AG04450 (cell line): ENCODE measurements at regions of chr4 and their contacts with region 1.

Region 1: DNA sequence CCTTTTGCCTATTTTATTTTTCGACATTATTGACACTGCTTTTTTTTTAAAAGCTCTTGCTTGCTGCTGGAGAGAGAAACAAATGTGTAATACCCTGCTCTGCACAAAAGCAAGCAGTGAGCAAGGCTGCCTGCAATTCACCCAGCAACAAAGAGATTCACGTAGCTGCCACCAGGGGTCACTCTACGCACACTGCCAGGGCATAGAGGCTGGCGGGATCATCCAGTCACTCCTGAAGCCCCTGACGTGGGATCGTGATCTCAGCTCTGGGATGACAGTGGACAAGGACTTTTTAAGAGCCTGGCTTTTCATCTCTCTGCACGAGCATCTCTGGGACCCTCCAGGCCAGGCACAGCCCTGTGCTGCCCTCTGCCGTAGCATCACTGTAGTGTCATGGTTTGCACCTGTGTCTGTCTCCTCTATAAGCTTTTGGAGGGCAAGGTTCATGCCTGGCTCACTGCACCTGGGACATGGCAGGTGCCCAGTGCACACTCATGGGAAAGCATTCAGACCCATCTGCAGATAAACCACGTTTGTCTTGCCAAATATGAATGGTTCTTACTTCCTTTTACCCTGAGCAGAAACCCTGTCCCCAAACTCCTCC is 19.8 kb downstream of the C4orf50 start:
- DNase-seq: peak; percentile 26
- H3K4me3 ChIP-seq: no peak overlapping the region
- H3K27ac ChIP-seq: no peak overlapping the region
- H3K27me3 ChIP-seq: peaks cover 3% of the 10 kb centered on the region
- CTCF ChIP-seq: peak; percentile 91

Region 2: GRCh38 chr4:5517372-5517771 is 481.1 kb before region 1 on chr4:
- CTCF ChIA-PET with region 1: no interaction called
- POLR2A ChIA-PET with region 1: no interaction called
- DNase-seq: no peak
- H3K4me3 ChIP-seq: no peak overlapping the region
- H3K27ac ChIP-seq: no peak overlapping the region
- H3K27me3 ChIP-seq: no peaks in the 10 kb centered on the region
- CTCF ChIP-seq: no peak

Region 3: DNA sequence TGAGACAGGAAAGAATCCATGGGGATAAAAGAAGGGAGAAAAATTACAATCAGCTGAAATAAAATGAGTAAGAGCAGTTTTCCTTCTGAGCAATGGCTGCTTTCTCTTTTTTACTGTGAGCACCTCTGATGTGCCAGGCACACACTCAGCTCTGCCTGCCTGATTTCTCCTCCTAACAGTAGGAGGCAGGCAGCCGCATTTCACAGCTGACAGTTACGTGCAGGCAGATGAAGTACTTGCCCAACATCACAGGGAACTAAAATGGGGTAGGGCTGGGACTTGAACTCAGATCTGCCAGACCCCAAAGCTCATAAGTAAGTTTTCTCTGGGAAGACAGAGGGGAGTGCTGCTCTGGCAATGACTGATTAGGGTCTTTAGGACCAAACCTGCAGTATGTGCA is 34.8 kb before region 1 on chr4:
- CTCF ChIA-PET with region 1: interaction called, 14 read pairs
- POLR2A ChIA-PET with region 1: no interaction called
- DNase-seq: no peak
- H3K4me3 ChIP-seq: no peak overlapping the region
- H3K27ac ChIP-seq: no peak overlapping the region
- H3K27me3 ChIP-seq: peaks cover 4% of the 10 kb centered on the region
- CTCF ChIP-seq: no peak

Region 4: DNA sequence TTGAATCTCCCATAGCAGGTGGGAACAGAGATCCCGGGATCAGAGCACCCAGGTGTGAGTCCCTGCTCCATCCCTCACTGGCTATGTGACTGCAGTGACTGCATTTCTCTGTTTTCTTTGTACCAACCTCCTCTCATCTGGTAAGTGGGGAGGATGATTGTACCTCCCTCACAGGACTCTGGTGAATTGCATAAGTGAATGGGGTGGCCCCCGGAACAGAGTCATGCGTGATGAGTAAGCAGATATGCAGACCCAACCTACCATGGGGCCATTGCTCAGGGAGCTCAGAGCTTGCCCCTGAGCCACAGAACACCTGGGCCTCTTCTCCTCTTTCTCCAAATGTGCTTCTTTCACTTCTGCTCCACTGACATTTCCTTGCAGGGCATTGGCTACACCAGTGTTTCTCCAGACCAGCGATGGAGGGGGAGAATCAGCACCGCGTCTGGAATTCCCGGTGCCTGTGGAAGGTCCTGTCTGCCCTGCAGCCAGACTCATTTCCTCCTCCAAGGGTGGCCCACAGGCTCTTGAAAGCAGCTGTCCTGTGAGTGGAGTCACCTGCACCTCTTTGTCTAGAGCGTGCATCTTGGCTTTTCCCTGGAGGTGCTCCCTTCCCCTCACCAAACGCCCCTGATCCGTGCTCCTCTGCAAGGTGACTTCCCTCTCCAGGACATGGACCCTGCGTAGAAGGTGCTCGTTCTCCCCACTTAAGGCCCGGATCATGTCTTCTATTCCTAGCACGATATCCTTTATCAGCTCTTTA is 10.2 kb before region 1 on chr4:
- CTCF ChIA-PET with region 1: interaction called, 35 read pairs
- POLR2A ChIA-PET with region 1: no interaction called
- DNase-seq: no peak
- H3K4me3 ChIP-seq: no peak overlapping the region
- H3K27ac ChIP-seq: no peak overlapping the region
- H3K27me3 ChIP-seq: no peaks in the 10 kb centered on the region
- CTCF ChIP-seq: no peak

Region 5: DNA sequence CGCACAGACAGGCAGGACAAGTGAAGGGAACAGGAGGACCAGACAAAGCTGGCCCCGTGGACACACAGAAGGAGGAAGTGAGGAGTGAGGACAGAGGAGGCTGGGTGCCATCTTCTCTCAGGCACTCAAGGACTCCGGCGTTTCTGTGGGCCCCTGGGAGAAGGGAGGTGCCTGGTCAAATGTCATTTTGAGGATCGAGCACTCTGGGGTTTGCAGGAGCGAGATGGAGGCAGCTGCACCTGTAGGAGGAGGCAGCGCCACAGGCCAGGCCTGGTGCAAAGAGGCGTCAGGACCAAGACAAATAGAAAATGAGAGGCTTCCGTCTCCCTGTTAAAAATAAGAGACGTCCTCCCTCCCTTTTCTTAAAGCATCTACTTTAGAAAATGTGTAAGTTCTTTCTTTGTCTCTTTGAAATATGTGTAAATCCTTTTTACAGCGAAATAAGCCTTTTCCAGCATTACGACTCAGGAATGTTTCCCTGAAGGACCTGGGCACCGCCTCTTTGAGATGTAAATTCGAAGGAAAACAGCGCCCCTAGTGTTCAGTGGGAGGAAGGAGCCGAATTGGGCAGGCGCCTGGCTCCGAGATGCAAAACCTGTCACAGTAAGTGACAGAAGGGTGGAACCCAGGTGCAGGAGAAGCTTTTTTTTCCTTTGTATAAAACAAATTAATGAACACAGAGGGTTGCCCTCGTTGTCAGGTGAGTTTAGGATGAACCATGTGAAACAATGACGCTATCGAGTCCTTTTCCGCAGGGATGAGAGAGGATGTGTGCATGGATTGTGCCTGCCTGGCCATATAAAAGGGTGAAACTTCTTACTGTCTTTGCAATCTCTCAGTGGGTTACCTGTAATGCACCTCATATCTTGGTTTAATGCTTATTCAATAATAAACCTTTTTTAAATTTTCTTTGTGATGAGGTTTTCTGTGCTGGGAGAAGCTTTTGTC is 21.2 kb after region 1 on chr4:
- CTCF ChIA-PET with region 1: interaction called, 22 read pairs
- POLR2A ChIA-PET with region 1: no interaction called
- DNase-seq: peak; percentile 2
- H3K4me3 ChIP-seq: no peak overlapping the region
- H3K27ac ChIP-seq: no peak overlapping the region
- H3K27me3 ChIP-seq: no peaks in the 10 kb centered on the region
- CTCF ChIP-seq: peak; percentile 75

Region 6: DNA sequence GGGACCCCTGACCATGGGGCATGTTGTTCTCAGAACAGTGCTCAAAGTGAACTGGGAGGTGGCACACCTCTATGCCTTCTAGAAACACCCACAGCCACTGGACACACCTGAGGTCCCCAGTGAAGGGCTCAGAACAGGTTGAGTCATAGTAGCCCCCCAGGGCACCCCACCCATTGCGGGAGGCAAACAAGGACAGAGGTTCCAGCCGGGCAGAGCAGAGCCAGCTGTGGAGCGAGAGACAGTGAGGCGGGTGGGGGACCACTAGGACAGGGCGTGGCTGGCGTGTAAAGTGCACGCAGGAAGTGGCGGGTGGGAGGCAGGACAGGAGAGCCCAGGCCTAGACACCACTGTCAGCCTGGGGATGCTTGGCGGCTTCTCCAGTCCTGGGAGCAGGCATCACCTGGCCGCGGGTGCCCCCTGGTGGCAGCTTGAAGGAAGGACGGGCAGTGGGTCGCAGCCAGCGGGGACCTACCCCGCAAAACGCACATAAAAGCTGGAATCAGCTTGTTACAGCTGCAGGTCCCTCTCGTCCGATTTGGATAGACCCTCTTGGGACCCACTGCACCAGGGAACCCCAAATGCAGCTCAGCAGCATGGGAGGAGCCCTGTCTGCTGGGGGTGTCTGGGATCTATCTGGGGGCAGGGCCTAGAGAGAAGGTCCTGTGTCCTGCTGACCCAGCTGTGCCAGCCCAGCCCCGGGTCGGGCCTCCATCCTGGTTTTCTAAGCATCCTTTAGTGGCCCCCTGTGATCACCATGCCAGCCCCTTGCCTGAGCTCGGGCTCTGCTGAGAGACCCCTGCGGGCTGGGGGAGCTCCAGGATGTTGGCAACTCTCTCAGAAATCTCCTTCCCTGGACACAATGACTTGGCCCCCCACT is 328.8 kb after region 1 on chr4:
- CTCF ChIA-PET with region 1: interaction called, 18 read pairs
- POLR2A ChIA-PET with region 1: no interaction called
- DNase-seq: peak; percentile 27
- H3K4me3 ChIP-seq: no peak overlapping the region
- H3K27ac ChIP-seq: no peak overlapping the region
- H3K27me3 ChIP-seq: peaks cover 20% of the 10 kb centered on the region
- CTCF ChIP-seq: peak; percentile 91